ENCODE measurements at regions of chr22 and their contacts with region 1.

Region 1: GRCh38 chr22:50562523-50563412 is at the start of gene SYCE3:
- DNase-seq: peak; percentile 85
- H3K27ac ChIP-seq: peak within 1 kb of the TSS; percentile 59
- CTCF ChIP-seq: peak; percentile 89

Region 2: GRCh38 chr22:50456466-50457234 is 106.1 kb before region 1 on chr22:
- CTCF ChIA-PET with region 1: no interaction called
- POLR2A ChIA-PET with region 1: no interaction called
- DNase-seq: no peak
- H3K27ac ChIP-seq: no peak overlapping the region
- CTCF ChIP-seq: peak; percentile 27

Region 3: GRCh38 chr22:50526069-50526833 is 36.5 kb before region 1 on chr22:
- CTCF ChIA-PET with region 1: interaction called, 5 read pairs
- POLR2A ChIA-PET with region 1: interaction called, 12 read pairs
- DNase-seq: no peak
- H3K27ac ChIP-seq: peak overlapping the region; percentile 97
- CTCF ChIP-seq: peak; percentile 73

Region 4: DNA sequence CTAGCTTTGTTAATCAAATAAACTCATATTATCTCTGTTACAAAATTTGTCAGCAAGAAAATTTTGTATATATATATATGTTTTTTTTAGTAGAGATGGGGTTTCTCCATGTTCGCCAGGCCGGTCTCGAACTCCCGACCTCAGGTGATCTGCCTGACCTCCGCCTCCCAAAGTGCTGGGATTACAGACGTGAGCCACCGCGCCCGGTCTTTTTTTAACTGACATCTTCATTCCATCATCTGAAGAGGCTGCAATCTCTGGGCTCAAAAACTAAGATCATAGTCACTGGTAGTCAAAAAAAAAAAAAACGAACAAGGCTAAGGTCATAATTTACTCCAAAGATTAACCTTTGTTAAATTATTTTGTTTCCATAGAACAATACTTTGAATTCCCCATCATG is 22.4 kb before region 1 on chr22:
- CTCF ChIA-PET with region 1: interaction called, 10 read pairs
- POLR2A ChIA-PET with region 1: interaction called, 5 read pairs
- DNase-seq: no peak
- H3K27ac ChIP-seq: peak overlapping the region; percentile 96
- CTCF ChIP-seq: no peak

Region 5: DNA sequence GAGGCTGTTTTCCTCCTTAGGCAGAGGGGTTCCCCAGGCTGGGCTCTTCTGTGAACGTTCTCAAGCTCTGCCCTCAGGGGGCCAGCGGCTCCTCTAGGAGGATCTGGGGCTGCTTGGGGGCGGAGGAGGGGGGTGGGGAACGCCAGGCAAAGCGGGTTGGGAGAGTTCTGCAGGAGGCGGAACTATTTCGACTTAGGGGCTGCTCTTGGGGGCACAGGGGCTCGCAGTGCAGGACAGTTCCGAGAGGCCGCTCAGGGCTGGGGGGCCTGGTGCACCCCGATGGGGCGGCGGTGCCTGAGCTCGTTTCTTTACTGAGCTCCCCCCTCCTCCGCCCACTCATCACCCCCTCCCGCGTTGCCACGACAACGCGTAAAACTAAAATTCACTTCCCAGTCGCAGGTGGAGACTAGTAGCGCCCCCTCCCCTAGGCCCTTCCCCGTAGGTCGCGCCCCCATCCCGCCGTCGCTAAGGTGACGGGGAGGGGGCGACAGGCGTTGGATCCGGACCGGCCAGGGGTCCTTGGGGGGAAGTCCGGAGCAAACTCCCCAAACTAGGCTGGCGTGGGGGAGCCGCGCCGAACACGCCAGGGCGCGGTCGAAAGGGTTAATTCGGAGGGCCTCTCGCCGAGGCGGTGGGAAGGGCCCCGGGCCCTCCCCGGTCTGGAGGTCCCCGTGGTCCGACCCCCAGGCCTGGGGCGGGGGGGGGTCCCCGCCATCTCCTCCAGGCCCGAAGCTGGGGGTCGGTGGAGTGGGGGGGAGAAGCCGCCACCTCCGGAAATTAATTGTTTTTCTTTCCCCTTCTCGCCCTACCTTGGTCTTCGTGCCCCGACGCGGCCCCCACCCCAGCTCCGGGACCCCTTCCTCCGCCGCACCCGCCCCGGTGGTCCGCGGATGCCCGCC is 110.7 kb after region 1 on chr22:
- CTCF ChIA-PET with region 1: no interaction called
- POLR2A ChIA-PET with region 1: interaction called, 10 read pairs
- DNase-seq: no peak
- H3K27ac ChIP-seq: no peak overlapping the region
- CTCF ChIP-seq: no peak

Region 6: GRCh38 chr22:50713571-50714056 is 150.8 kb after region 1 on chr22:
- CTCF ChIA-PET with region 1: no interaction called
- POLR2A ChIA-PET with region 1: no interaction called
- DNase-seq: no peak
- H3K27ac ChIP-seq: no peak overlapping the region
- CTCF ChIP-seq: no peak